Activated CD4-positive, alpha-beta T cell treated with anti-CD3 and anti-CD28 coated beads, Interleukin-2, amount 10 ng/mL, durations not matched to agents 24 days and 14 days (primary cell): ENCODE measurements at regions of chr2 and their contacts with region 1.

Region 1: DNA sequence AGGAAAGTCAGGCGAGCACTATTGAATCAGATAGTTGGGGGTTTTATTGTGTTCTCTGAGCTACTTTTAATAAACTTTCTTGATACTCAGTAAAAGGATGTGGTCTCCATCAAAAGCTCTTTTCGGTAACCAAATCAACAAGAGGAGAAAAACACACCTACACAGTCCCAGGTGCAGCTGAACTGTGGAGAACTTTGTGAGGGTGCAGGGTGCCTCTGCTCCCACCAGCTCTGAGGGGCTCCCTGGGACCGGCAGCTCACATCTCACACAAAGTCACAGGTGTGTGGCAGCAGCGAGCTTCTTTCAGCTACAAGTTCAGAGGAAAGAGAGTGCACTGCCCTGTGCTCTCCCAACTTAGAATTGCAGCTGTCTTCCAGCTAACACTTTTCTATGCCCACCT is 650.4 kb downstream of the RNF144A start:
- DNase-seq: peak; percentile 89
- H3K4me3 Mint-ChIP-seq: peak overlapping the region; percentile 65
- H3K27ac Mint-ChIP-seq: peak overlapping the region; percentile 97
- H3K4me1 Mint-ChIP-seq: peaks cover 58% of the 10 kb centered on the region
- H3K27me3 Mint-ChIP-seq: no peaks in the 10 kb centered on the region

Region 2: DNA sequence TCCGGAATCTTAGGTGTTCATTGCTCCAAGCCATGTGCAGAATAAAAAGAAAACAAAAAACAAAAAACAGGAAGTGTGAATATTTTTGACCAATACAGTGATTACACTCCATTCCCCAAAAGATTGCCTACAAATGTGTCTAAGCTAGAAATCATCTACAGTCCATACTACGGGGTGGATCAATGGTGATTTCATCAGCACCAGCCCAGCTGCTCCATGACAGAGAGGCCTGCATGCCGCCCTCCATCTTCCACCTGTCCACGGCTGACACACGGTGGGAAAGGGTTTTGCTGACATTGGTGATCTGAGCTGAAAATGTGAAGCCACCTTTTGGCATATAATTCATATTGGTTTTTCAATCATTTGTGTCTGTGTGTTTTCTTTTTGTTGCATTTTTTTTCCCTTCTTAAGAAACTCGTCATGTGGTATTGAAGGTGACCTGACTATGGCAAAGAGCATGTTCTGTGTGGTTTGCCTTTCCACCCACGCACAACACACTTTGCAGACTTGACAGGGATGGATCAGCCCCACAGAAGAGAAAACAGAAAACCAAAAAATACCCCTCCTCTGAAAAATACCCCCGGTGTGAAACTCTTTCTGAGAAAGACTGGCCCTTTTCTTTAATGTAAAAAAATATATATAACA is 117.3 kb before region 1 on chr2:
- intact Hi-C with region 1: loop called (anchors 1 kb)
- DNase-seq: peak; percentile 90
- H3K4me3 Mint-ChIP-seq: peak overlapping the region; percentile 58
- H3K27ac Mint-ChIP-seq: peak overlapping the region; percentile 100
- H3K4me1 Mint-ChIP-seq: peaks cover 70% of the 10 kb centered on the region
- H3K27me3 Mint-ChIP-seq: no peaks in the 10 kb centered on the region

Region 3: DNA sequence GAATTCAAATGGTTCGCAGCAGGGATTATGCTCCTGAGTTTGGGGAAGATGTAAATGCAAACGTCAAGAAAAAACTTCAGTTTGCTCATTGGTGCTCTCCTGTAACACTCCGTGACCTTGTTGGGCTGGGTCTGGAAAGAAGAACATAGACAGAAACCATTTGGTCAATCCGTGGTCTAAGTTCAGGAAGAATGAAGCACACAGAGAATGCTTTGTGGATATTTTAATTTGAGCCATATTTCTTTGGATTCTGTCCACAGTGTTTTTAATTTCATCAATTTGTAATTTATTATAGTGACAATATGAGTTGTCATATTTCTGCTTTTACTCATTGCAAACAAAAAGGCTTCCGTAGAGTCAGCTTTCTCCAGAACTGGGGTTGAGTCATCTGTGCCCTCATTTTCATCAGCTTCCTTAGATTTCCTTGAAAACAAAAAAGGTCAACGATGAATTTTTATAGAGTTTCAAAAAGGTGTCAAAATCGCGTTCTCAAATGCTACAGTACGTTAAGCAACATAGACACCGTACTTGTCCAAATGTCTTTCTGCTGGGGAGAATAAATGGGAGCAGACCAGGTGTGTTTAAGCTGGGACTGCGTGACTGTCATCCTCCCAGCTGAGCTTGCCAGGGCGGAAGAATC is 44.0 kb before region 1 on chr2:
- intact Hi-C with region 1: loop called (anchors 2 kb)
- DNase-seq: no peak
- H3K4me3 Mint-ChIP-seq: peak overlapping the region; percentile 63
- H3K27ac Mint-ChIP-seq: peak overlapping the region; percentile 98
- H3K4me1 Mint-ChIP-seq: peaks cover 53% of the 10 kb centered on the region
- H3K27me3 Mint-ChIP-seq: no peaks in the 10 kb centered on the region

Region 4: GRCh38 chr2:7577769-7578168 is 10.1 kb after region 1 on chr2:
- intact Hi-C with region 1: no loop called
- DNase-seq: peak; percentile 12
- H3K4me3 Mint-ChIP-seq: no peak overlapping the region
- H3K27ac Mint-ChIP-seq: peak overlapping the region; percentile 44
- H3K4me1 Mint-ChIP-seq: peaks cover 15% of the 10 kb centered on the region
- H3K27me3 Mint-ChIP-seq: no peaks in the 10 kb centered on the region

Region 5: GRCh38 chr2:7588295-7588694 is 20.6 kb after region 1 on chr2:
- intact Hi-C with region 1: loop called (anchors 1 kb)
- DNase-seq: peak; percentile 50
- H3K4me3 Mint-ChIP-seq: peak overlapping the region; percentile 2
- H3K27ac Mint-ChIP-seq: peak overlapping the region; percentile 68
- H3K4me1 Mint-ChIP-seq: peaks cover 22% of the 10 kb centered on the region
- H3K27me3 Mint-ChIP-seq: no peaks in the 10 kb centered on the region

Region 6: GRCh38 chr2:7725171-7725849 is 157.7 kb after region 1 on chr2:
- intact Hi-C with region 1: loop called (anchors 2 kb)
- DNase-seq: peak; percentile 88
- H3K4me3 Mint-ChIP-seq: peak overlapping the region; percentile 87
- H3K27ac Mint-ChIP-seq: peak overlapping the region; percentile 92
- H3K4me1 Mint-ChIP-seq: peaks cover 53% of the 10 kb centered on the region
- H3K27me3 Mint-ChIP-seq: no peaks in the 10 kb centered on the region

Region 7: DNA sequence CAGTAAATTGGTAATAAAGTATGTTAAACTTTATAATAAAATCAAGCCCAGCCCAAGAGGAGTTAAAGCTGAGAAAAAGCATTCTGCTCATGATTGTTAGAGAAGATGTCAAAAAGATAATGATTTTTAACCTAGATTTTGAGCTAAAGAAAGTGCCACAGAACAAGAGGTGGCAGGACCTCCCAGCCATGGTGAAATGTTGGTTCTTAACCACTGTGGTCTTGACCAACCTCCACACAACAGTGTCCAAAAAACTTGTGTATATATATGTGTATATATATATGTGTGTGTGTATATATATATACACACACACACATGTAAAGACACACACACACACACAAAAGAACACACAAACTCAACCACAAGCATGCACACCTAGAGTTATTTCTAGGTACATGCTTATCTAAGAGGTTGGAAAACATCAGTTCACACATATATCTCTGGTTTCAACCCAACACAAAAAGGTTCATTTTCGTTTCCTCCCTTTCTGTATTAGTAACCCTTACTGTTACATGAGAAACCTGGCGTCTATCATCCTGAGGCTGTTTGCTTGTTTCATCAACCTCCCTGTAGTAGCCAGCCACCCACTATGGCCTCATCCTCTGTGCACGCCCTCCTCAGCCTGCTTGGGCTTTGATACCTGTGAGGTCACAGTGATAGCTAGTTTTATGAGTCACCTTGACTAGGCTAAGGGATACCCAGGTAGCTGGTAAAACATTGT is 482.4 kb after region 1 on chr2:
- intact Hi-C with region 1: loop called (anchors 1 kb)
- DNase-seq: peak; percentile 81
- H3K4me3 Mint-ChIP-seq: peak overlapping the region; percentile 7
- H3K27ac Mint-ChIP-seq: peak overlapping the region; percentile 84
- H3K4me1 Mint-ChIP-seq: peaks cover 23% of the 10 kb centered on the region
- H3K27me3 Mint-ChIP-seq: no peaks in the 10 kb centered on the region

Region 8: DNA sequence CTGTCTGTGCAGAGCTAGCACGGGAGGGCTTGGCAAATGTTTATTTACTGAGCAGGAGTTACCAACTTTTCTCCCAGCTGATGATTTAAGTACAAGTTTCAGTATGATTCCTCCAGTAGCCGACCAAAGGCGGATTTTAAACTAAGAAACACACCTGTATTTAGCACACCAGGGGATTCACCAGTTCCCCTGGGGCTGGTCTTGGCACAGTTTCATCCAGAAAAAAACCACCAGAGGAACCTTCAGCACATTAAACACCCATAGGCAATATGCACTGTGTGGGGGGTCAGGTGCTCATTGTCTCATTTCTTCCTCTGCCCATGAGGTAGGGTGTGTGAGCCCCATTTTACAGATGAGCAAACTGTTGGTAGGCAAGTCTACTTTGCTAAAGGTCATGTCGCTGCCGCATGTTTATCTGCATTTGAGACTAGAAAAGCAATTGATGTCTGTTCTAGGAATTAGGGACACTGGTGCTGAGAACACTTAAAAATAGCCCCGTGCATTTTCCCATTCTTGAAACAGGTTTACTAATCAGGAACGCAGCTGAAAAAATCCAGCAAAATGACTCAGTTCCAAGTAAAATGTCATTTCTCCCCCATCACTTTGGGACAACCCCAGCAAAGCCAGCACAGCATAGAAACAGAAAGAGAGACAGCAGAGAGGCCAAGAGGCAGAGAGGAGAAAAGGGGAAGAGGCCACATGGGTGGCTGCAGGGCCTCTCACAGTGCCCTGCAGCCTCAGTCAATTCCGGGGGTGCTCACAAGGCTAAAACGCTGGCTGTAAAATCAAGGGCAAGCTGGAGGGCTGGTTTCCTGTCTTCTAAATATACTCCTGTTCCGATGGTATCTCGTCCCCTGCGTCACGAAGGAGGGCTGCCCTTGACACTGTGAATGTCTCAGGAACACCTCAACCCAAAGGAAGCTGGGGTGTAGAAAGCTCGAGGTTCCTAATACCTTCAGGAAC is 947.4 kb after region 1 on chr2:
- intact Hi-C with region 1: loop called (anchors 10 kb)
- DNase-seq: peak; percentile 87
- H3K4me3 Mint-ChIP-seq: peak overlapping the region; percentile 58
- H3K27ac Mint-ChIP-seq: peak overlapping the region; percentile 96
- H3K4me1 Mint-ChIP-seq: peaks cover 63% of the 10 kb centered on the region
- H3K27me3 Mint-ChIP-seq: no peaks in the 10 kb centered on the region